ENCODE measurements at regions of chr22 and their contacts with region 1.

Region 1: GRCh38 chr22:26143801-26144325 is 25.4 kb upstream of the SEZ6L start:
- DNase-seq: no peak
- ATAC-seq: no peak
- H3K4me3 ChIP-seq: no peak overlapping the region
- H3K27ac ChIP-seq: no peak overlapping the region
- H3K4me1 ChIP-seq: no peaks in the 10 kb centered on the region
- H3K27me3 ChIP-seq: peaks cover 1 to 3% of the 10 kb centered on the region in 2 experiments; a peak in 2 of 4 replicates
- CTCF ChIP-seq: no peak
- EP300 ChIP-seq: no peak
- POLR2A ChIP-seq: no peak
- RAD21 ChIP-seq: no peak

Region 2: GRCh38 chr22:26172389-26172990 is 28.6 kb after region 1 on chr22:
- CTCF ChIA-PET with region 1: interaction called, 20 read pairs
- POLR2A ChIA-PET with region 1: no interaction called
- RAD21 ChIA-PET with region 1: no interaction called
- SMC1A ChIA-PET with region 1: no interaction called
- in situ Hi-C with region 1: no loop called
- intact Hi-C with region 1: no loop called
- DNase-seq: no peak
- ATAC-seq: peak; percentile 85
- H3K4me3 ChIP-seq: no peak overlapping the region
- H3K27ac ChIP-seq: no peak overlapping the region
- H3K4me1 ChIP-seq: no peaks in the 10 kb centered on the region
- H3K27me3 ChIP-seq: peaks cover 5 to 11% of the 10 kb centered on the region in 2 experiments
- CTCF ChIP-seq: peak; percentile 70 to 77 (median 71)
- EP300 ChIP-seq: no peak
- POLR2A ChIP-seq: no peak
- RAD21 ChIP-seq: peak; percentile 56

Measured in GM12878 (cell line).